Caco-2 (cell line): ENCODE measurements at regions of chr10 and their contacts with region 1.

Region 1: DNA sequence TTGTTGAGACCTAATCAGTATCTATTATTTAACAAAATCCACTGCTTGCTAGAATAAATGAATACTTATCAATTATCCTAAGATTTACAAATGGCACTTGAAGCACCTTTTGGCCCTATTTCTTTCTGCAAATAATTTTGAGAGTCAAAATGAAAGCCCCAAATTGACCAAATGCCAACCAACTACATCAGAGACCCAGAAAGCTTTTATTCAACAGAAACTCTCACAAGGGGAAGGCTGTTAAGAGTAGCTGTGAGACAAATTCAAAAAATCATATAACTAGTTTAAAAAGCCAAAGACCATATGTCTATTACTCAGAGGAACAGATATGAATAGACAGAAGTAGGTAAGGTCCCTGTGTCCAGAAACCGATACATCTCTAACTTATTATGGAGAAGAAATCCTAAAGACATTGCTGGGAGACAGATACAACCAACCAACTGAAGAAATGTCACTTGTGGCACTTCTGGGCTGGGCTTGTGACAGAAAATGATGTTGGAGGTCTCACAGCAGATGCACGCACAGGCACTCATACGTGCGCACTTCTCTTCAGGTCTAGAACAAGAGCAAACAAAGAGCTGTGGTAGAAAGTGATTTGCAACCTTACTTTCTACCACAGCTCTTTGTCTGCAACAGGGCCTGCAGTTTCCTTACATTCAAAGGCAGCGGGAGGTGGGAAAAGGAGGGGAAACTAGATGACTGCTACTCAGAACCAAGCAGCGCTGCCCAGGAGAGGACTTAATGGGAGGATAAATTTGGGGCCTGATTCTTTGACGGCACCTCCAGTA is 58.6 kb upstream of the KCNIP2 start:
- DNase-seq: no peak
- H3K4me3 ChIP-seq: no peak overlapping the region
- H3K4me3 Mint-ChIP-seq: no peak overlapping the region
- H3K27ac Mint-ChIP-seq: no peak overlapping the region
- H3K4me1 ChIP-seq: no peaks in the 10 kb centered on the region
- H3K4me1 Mint-ChIP-seq: no peaks in the 10 kb centered on the region
- H3K27me3 ChIP-seq: no peaks in the 10 kb centered on the region
- H3K27me3 Mint-ChIP-seq: no peaks in the 10 kb centered on the region
- CTCF ChIP-seq: no peak

Region 2: GRCh38 chr10:101725296-101726115 is 176.7 kb before region 1 on chr10:
- CTCF ChIA-PET with region 1: no interaction called
- POLR2A ChIA-PET with region 1: no interaction called
- intact Hi-C with region 1: no loop called
- DNase-seq: peak; percentile 36 to 59
- H3K4me3 ChIP-seq: no peak overlapping the region
- H3K4me3 Mint-ChIP-seq: no peak overlapping the region
- H3K27ac Mint-ChIP-seq: peak overlapping the region; percentile 43
- H3K4me1 ChIP-seq: peaks cover 20% of the 10 kb centered on the region
- H3K4me1 Mint-ChIP-seq: peaks cover 20% of the 10 kb centered on the region
- H3K27me3 ChIP-seq: no peaks in the 10 kb centered on the region
- H3K27me3 Mint-ChIP-seq: no peaks in the 10 kb centered on the region
- CTCF ChIP-seq: no peak

Region 3: DNA sequence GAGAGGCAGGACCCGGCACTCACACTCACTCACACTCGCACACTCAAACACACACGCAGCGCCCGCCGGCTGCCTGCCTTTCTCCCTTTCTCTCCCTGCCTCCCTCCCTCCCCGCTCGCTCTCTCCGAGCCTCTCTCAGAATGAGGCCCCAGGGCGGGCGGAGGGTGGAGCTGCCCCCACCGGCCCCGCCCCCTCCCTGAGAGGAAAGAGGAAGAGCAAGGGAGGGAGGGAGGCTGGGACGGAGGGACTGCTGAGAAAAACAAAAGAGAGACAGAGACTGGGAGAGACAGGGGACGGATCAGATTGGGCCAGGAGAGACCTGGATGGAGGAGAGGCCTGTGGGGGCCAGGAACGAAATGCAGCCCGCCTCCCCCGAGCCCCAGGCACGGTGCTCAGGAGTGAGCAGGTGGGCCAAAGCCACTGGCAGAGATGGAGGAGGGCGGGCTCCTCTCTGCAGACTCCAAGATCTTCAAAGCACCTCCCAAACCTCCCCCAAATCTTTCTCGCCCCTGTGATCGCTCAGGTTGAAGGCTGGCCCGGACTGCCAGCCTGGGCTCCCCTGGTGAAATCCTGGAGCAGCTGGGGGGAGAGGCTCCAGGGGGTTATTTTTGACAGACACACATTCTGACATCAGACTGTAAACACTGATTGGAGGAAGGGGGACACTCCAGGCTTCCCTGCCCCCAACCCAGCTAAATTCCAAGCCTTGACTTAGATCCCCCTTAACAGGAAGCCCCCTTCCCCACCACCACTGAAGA is 212.8 kb after region 1 on chr10:
- CTCF ChIA-PET with region 1: no interaction called
- POLR2A ChIA-PET with region 1: interaction called, 12 read pairs
- intact Hi-C with region 1: no loop called
- DNase-seq: peak; percentile 88 to 89
- H3K4me3 ChIP-seq: peak overlapping the region; percentile 56
- H3K4me3 Mint-ChIP-seq: peak overlapping the region; percentile 95
- H3K27ac Mint-ChIP-seq: peak overlapping the region; percentile 94
- H3K4me1 ChIP-seq: peaks cover 26% of the 10 kb centered on the region
- H3K4me1 Mint-ChIP-seq: peaks cover 37% of the 10 kb centered on the region
- H3K27me3 ChIP-seq: no peaks in the 10 kb centered on the region
- H3K27me3 Mint-ChIP-seq: no peaks in the 10 kb centered on the region
- CTCF ChIP-seq: no peak